SK-N-SH (cell line): ENCODE measurements at regions of chr9 and their contacts with region 1.

Region 1: DNA sequence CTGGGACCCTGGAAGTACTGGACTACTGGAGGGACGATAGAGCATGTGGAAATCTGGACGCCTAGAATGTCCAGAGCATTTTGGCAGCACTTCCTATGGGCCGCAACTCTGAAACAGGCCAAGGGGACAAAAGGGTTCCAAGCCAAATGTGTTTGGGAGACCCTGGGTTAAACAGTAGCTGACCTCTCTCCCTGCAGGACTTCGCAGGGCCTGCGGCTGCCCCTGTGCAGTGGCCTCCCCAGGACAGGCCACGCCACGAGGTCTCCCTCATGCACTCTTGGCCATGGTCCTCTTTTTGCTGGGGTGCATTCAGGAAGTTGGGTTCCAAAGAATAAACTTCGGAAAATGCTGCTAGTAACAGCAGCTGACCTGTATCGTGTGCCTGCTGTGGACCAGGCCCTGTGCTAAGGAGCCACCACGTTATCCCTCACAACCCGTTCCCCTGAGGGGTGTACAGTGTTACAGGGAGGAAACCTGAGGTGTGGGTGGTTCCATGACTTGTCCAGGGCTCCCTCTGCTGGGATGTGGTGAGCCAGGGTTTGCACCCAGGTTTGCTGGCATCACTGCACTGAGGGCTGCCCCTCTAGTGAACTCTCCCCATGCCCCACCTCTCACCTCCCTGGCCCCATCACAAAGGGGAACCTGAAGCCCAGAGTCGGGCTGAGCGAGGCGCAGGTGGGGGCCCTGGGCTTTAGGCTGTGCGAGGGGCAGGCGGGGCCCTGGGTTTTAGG is 79.4 kb downstream of the AMBP start:
- DNase-seq: peak; percentile 56
- H3K4me3 ChIP-seq: no peak overlapping the region
- H3K27ac ChIP-seq: no peak overlapping the region; a peak in 1 of 4 replicates
- H3K4me1 ChIP-seq: peaks cover 10 to 54% of the 10 kb centered on the region in 2 experiments; a peak in 3 of 4 replicates
- H3K27me3 ChIP-seq: no peaks in the 10 kb centered on the region
- CTCF ChIP-seq: peak; percentile 28
- EP300 ChIP-seq: no peak
- RAD21 ChIP-seq: peak; percentile 55

Region 2: DNA sequence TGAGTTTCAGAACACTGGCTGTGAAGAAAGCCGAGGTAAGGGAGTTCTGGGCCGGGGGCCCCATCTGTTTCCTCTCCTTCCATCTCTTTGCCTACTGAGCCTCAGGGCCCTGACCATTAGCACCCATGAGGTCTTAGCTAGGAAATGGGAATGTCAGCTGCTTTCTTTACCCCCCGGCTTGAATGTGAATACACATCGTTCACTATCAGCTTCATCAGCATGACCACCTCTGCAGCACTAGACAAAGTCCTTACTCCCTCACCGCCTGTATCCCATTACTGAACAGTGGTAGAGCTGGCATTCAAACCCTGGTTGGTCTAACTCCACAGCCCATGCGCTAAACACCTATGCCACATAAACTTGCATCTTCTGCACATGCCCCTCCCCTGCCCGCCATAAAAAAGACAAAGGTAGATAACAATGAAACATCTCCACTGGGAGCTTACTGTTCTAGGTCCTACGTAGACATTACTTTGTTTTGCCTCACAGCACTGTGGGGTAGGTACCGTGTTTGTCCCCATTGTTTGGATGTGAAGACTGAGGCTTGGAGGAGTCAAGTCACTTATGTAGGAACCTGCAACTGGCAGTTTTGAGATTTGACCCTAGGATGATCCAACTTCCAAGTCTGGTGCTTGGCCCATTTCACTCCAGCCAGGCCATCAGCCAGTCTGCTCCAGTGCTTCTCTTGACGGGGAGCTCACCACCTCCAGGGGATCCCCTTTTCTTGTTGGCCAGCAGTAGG is 13.9 kb before region 1 on chr9:
- CTCF ChIA-PET with region 1: interaction called, 11 read pairs
- POLR2A ChIA-PET with region 1: no interaction called
- DNase-seq: no peak
- H3K4me3 ChIP-seq: no peak overlapping the region
- H3K27ac ChIP-seq: no peak overlapping the region; a peak in 1 of 4 replicates
- H3K4me1 ChIP-seq: peaks cover 6 to 51% of the 10 kb centered on the region in 2 experiments; a peak in 3 of 4 replicates
- H3K27me3 ChIP-seq: no peaks in the 10 kb centered on the region
- CTCF ChIP-seq: no peak
- EP300 ChIP-seq: no peak
- RAD21 ChIP-seq: no peak

Region 3: DNA sequence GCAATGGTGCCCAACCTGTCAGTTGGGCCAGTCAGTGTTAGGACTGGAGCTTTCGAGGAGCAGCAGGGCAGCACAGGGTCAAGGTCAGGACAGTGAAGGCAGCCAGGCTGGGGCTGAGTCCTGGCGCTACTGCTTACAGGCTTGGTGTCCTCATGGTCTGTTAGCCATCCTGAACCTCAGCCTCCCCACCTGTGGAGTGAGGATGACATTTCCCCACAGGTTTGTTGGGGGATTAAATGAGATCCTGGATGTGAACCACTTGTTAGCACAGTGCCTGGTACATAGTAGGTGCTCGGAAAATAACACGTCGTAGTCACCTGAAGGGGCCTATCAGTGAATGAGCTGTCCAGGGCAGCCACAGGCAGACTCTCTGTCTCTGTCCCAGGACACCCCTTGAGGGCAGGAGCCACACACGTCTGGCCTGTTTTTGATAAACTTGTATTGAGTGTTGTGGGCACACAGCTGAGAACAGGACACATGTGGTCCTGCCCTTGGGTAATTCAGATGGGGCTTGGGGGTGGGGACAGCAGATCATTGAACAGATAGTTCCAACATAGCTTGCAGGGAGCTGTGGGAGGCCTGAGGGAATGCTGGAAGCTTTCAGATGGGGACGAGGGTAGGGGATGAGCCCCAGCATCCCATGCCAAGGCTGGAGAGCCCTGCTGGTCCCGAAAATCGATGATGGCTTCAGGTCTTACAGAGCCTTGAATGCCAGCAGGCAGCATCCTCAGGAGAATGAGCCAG is 10.1 kb after region 1 on chr9:
- CTCF ChIA-PET with region 1: no interaction called
- POLR2A ChIA-PET with region 1: no interaction called
- DNase-seq: no peak
- H3K4me3 ChIP-seq: no peak overlapping the region
- H3K27ac ChIP-seq: no peak overlapping the region; a peak in 1 of 4 replicates
- H3K4me1 ChIP-seq: peaks cover 0 to 27% of the 10 kb centered on the region in 2 experiments; a peak in 2 of 4 replicates
- H3K27me3 ChIP-seq: no peaks in the 10 kb centered on the region
- CTCF ChIP-seq: no peak
- EP300 ChIP-seq: no peak
- RAD21 ChIP-seq: no peak